ENCODE measurements at regions of chr11 and their contacts with region 1.

Region 1: GRCh38 chr11:74030723-74031676 is 22.1 kb upstream of the UCP3 start:
- DNase-seq: peak in 1 of 9 experiments; percentile 36
- ATAC-seq: peak; percentile 33
- H3K4me3 ChIP-seq: no peak overlapping the region
- H3K4me3 Mint-ChIP-seq: peak overlapping the region; percentile 24
- H3K27ac ChIP-seq: peak overlapping the region in 1 of 2 experiments; percentile 64
- H3K27ac Mint-ChIP-seq: peak overlapping the region; percentile 60
- H3K4me1 ChIP-seq: peaks cover 7% of the 10 kb centered on the region
- H3K4me1 Mint-ChIP-seq: peaks cover 25% of the 10 kb centered on the region
- H3K27me3 ChIP-seq: no peaks in the 10 kb centered on the region
- H3K27me3 Mint-ChIP-seq: no peaks in the 10 kb centered on the region
- CTCF ChIP-seq: no peak

Region 2: DNA sequence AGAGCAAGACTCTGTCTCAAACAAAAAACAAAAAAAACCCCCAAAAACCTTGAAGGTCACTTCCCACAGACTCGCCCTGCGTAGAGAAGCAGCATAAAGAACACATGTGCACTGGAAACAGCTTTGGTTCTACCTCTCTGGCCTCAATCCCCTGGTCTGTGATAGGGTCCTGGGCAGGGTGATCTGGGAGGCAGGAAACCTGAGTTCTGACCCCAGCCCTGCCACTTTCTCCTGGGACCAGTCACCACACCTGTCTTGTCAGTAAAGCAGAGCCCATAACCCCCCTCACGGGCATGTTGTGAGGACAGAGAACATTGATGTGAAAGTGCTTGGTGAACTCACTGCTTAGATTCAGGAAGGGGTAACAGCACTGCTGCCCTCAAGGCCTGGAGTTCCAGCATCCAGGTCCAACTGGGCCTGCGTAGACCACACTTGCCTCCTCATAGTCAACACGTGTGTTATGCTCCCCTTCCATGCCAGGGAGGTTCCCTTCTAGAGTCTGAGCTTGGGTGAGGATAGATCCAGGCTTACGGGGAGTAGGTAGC is 59.8 kb before region 1 on chr11:
- CTCF ChIA-PET with region 1: interaction called, 19 read pairs
- POLR2A ChIA-PET with region 1: interaction called, 11 read pairs
- intact Hi-C with region 1: no loop called
- DNase-seq: peak in 4 of 9 experiments; percentile 26 to 48 (median 40)
- ATAC-seq: no peak
- H3K4me3 ChIP-seq: no peak overlapping the region
- H3K4me3 Mint-ChIP-seq: no peak overlapping the region
- H3K27ac ChIP-seq: peak overlapping the region in 1 of 2 experiments; percentile 79
- H3K27ac Mint-ChIP-seq: peak overlapping the region; percentile 99
- H3K4me1 ChIP-seq: peaks cover 90% of the 10 kb centered on the region
- H3K4me1 Mint-ChIP-seq: peaks cover 88% of the 10 kb centered on the region
- H3K27me3 ChIP-seq: no peaks in the 10 kb centered on the region
- H3K27me3 Mint-ChIP-seq: no peaks in the 10 kb centered on the region
- CTCF ChIP-seq: no peak

Region 3: DNA sequence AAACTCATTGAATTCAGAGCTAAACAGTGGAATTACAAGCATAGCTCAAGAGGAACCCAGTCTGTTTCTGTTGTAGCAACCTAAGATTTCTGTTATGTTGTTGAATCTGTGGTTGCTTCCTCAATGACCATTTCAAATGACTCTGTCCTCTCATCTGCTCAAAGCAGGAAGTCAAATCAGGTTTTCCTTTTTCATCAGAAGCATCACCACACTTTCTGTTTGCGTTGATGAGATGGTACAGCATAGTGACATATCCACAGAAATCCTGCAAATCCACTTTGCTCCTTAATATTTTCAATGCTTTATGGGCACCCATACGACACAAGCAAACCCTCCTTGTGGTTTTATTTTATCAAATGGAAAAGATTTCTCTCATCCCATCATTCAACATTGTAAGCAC is 35.8 kb before region 1 on chr11:
- CTCF ChIA-PET with region 1: interaction called, 4 read pairs
- POLR2A ChIA-PET with region 1: interaction called, 4 read pairs
- intact Hi-C with region 1: loop called in 1 of 2 experiments (anchors 1 kb)
- DNase-seq: peak in 2 of 9 experiments; percentile 81 to 92
- ATAC-seq: peak; percentile 75
- H3K4me3 ChIP-seq: peak overlapping the region; percentile 1 to 28
- H3K4me3 Mint-ChIP-seq: peak overlapping the region; percentile 74
- H3K27ac ChIP-seq: peak overlapping the region; percentile 87 to 98
- H3K27ac Mint-ChIP-seq: peak overlapping the region; percentile 94
- H3K4me1 ChIP-seq: peaks cover 72% of the 10 kb centered on the region
- H3K4me1 Mint-ChIP-seq: peaks cover 73% of the 10 kb centered on the region
- H3K27me3 ChIP-seq: no peaks in the 10 kb centered on the region
- H3K27me3 Mint-ChIP-seq: no peaks in the 10 kb centered on the region
- CTCF ChIP-seq: no peak

Region 4: DNA sequence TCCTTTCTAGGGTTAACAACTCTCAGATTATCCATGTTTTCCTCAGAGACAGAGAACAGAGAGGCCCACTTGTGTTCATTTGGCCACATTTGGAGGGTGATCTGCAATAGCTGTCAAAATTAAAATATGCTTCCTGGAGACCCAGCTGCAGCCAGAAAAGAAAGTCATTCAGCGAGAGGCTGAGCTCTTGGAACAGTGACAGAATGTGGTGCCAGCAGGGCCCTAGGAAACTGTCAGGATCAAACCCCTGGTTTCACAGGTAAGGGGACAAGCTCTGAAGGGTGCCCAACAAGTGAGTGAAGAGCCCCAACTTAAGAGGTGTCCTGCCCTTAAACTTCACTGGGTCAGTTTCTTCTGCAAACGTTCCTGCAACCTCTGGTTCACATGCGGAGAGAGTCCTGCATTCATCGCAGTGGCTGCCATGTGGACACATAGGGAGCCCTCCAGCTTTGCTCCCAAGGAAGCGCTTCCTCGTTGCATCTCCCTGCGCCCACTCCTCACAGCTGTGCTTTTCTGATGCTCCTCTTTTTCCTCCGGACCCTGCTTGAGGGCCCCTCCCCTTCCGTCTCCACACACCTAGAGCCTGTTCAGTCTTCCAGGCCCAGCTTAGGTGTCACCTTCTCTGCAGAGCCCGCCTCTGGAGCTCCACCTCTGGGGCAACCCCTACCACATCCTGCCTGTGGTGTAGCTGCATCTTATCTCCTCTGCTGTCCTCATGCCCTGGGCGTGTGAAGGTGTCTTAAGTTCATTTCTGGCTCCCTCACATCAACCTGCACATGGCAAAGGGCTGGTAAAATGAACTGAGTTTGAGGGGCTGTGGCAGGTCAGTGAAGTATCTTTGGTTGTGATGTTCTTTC is 26.0 kb before region 1 on chr11:
- CTCF ChIA-PET with region 1: interaction called, 3 read pairs
- POLR2A ChIA-PET with region 1: interaction called, 3 read pairs
- intact Hi-C with region 1: loop called in 1 of 2 experiments (anchors 2 kb)
- DNase-seq: peak; percentile 71 to 96 (median 88)
- ATAC-seq: peak; percentile 99
- H3K4me3 ChIP-seq: peak overlapping the region; percentile 20 to 36
- H3K4me3 Mint-ChIP-seq: peak overlapping the region; percentile 79
- H3K27ac ChIP-seq: peak overlapping the region; percentile 68 to 77
- H3K27ac Mint-ChIP-seq: peak overlapping the region; percentile 95
- H3K4me1 ChIP-seq: peaks cover 72% of the 10 kb centered on the region
- H3K4me1 Mint-ChIP-seq: peaks cover 77% of the 10 kb centered on the region
- H3K27me3 ChIP-seq: no peaks in the 10 kb centered on the region
- H3K27me3 Mint-ChIP-seq: no peaks in the 10 kb centered on the region
- CTCF ChIP-seq: no peak

Region 5: GRCh38 chr11:74011360-74012073 is 19.5 kb before region 1 on chr11:
- CTCF ChIA-PET with region 1: interaction called, 5 read pairs
- POLR2A ChIA-PET with region 1: no interaction called
- intact Hi-C with region 1: loop called in 1 of 2 experiments (anchors 2 kb)
- DNase-seq: peak in 3 of 9 experiments; percentile 27 to 74 (median 34)
- ATAC-seq: peak; percentile 55
- H3K4me3 ChIP-seq: no peak overlapping the region
- H3K4me3 Mint-ChIP-seq: peak overlapping the region; percentile 63
- H3K27ac ChIP-seq: peak overlapping the region; percentile 32 to 52
- H3K27ac Mint-ChIP-seq: peak overlapping the region; percentile 94
- H3K4me1 ChIP-seq: peaks cover 93% of the 10 kb centered on the region
- H3K4me1 Mint-ChIP-seq: peaks cover 88% of the 10 kb centered on the region
- H3K27me3 ChIP-seq: no peaks in the 10 kb centered on the region
- H3K27me3 Mint-ChIP-seq: no peaks in the 10 kb centered on the region
- CTCF ChIP-seq: no peak

Region 6: GRCh38 chr11:74085542-74085892 is 54.5 kb after region 1 on chr11:
- CTCF ChIA-PET with region 1: no interaction called
- POLR2A ChIA-PET with region 1: no interaction called
- intact Hi-C with region 1: no loop called
- DNase-seq: no peak
- ATAC-seq: no peak
- H3K4me3 ChIP-seq: no peak overlapping the region
- H3K4me3 Mint-ChIP-seq: no peak overlapping the region
- H3K27ac ChIP-seq: no peak overlapping the region
- H3K27ac Mint-ChIP-seq: no peak overlapping the region
- H3K4me1 ChIP-seq: no peaks in the 10 kb centered on the region
- H3K4me1 Mint-ChIP-seq: no peaks in the 10 kb centered on the region
- H3K27me3 ChIP-seq: no peaks in the 10 kb centered on the region
- H3K27me3 Mint-ChIP-seq: no peaks in the 10 kb centered on the region
- CTCF ChIP-seq: no peak

Measured in CD8-positive, alpha-beta T cell (primary cell).